Heart left ventricle (tissue), 16 donors: ENCODE measurements at regions of chr3 and their contacts with region 1.

Region 1: DNA sequence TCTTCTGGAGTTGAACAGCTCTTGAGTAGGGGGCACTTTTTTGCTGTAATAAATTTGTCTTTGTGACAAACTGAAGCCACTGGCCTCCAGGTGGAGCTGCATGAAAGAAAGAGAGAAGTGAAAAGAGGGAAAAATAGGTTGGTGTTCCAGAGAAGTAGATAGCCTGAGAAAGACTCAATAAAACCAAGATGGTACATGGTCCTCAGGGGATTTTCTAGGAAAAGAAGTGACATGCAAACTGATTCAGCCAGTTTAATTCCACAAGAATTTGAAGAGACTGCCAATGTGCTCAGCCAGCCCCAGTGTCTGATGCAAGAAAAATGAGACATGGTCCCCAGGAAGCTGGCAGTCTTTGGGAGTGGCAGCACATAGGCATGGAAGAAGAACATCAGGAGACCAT is 152.7 kb downstream of the CD47 start:
- DNase-seq: peak in 1 of 5 donors; percentile 26
- ATAC-seq: peak in 2 of 4 donors; percentile 36
- H3K4me3 ChIP-seq: no peak overlapping the region
- H3K27ac ChIP-seq: no peak overlapping the region
- H3K4me1 ChIP-seq: peaks cover 0 to 4% (median 0%) of the 10 kb centered on the region in 12 donors
- H3K27me3 ChIP-seq: no peaks in the 10 kb centered on the region
- CTCF ChIP-seq: peak; percentile 15 to 59 (median 47)
- POLR2A ChIP-seq: no peak

Region 2: DNA sequence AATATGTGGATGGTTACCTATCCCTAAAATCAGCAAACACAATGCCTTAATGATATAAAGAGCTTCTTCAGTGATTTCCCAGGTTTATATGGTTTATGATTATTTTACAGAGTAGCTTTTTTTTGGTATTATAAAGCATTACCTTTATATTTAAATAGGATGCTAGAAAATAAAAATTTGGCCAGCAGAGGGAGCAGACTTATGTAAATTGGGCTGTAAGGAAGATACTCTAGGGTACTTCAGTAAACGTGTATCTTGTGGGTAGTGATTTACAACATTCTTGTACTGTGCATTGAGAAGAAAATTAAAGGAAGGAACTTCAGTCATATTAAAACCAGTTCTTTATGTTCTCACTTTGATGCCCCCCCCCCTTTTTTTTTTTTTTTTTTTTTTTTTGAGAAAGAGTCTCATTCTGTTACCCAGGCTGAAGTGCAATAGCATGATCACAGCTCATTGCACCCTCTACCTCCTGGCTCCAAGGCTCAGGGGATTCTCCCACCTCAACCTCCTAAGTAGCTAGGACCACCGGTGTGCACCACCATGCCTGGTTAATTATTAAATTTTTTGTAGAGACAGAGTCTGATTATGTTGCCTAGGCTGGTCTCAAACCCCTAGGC is 247.5 kb before region 1 on chr3:
- intact Hi-C with region 1: no loop called
- DNase-seq: no peak
- ATAC-seq: peak in 2 of 4 donors; percentile 55 to 61
- H3K4me3 ChIP-seq: no peak overlapping the region
- H3K27ac ChIP-seq: no peak overlapping the region
- H3K4me1 ChIP-seq: peaks cover 0 to 8% (median 0%) of the 10 kb centered on the region in 12 donors
- H3K27me3 ChIP-seq: no peaks in the 10 kb centered on the region
- CTCF ChIP-seq: peak; percentile 31 to 66 (median 52)
- POLR2A ChIP-seq: no peak

Region 3: GRCh38 chr3:108022256-108023097 is 84.3 kb after region 1 on chr3:
- intact Hi-C with region 1: no loop called
- DNase-seq: no peak
- ATAC-seq: peak in 1 of 4 donors; percentile 41
- H3K4me3 ChIP-seq: no peak overlapping the region
- H3K27ac ChIP-seq: no peak overlapping the region
- H3K4me1 ChIP-seq: peaks cover 0 to 10% (median 0%) of the 10 kb centered on the region in 12 donors
- H3K27me3 ChIP-seq: no peaks in the 10 kb centered on the region
- CTCF ChIP-seq: no peak
- POLR2A ChIP-seq: no peak

Region 4: GRCh38 chr3:108090701-108091451 is 152.7 kb after region 1 on chr3 and contains the start of gene CD47:
- intact Hi-C with region 1: loop called in 2 of 10 experiments (anchors 5 kb)
- DNase-seq: peak; percentile 95 to 99 (median 96)
- ATAC-seq: peak; percentile 82 to 97 (median 94)
- H3K4me3 ChIP-seq: peak within 1 kb of the TSS; percentile 84 to 99 (median 92)
- H3K27ac ChIP-seq: peak within 1 kb of the TSS; percentile 25 to 97 (median 90)
- H3K4me1 ChIP-seq: peaks cover 0 to 41% (median 19%) of the 10 kb centered on the region in 12 donors
- H3K27me3 ChIP-seq: no peaks in the 10 kb centered on the region
- CTCF ChIP-seq: no peak
- POLR2A ChIP-seq: peak; percentile 19 to 89
- total RNA-seq, gene CD47: 34.4 to 80.6 (median 45.2) TPM

Region 5: GRCh38 chr3:108322352-108322751 is 384.2 kb after region 1 on chr3:
- intact Hi-C with region 1: loop called in 2 of 10 experiments (anchors 10 kb)
- DNase-seq: no peak
- ATAC-seq: no peak
- H3K4me3 ChIP-seq: no peak overlapping the region
- H3K27ac ChIP-seq: no peak overlapping the region
- H3K4me1 ChIP-seq: no peaks in the 10 kb centered on the region
- H3K27me3 ChIP-seq: no peaks in the 10 kb centered on the region
- CTCF ChIP-seq: peak in 4 of 12 donors; percentile 8 to 16 (median 14)
- POLR2A ChIP-seq: no peak

Region 6: GRCh38 chr3:108472001-108472591 is 534.0 kb after region 1 on chr3:
- intact Hi-C with region 1: loop called in 7 of 10 experiments (anchors 2 to 10 kb)
- DNase-seq: no peak
- ATAC-seq: peak in 2 of 4 donors; percentile 27 to 33
- H3K4me3 ChIP-seq: no peak overlapping the region
- H3K27ac ChIP-seq: no peak overlapping the region
- H3K4me1 ChIP-seq: peaks cover 0 to under 1% (median 0%) of the 10 kb centered on the region in 12 donors
- H3K27me3 ChIP-seq: no peaks in the 10 kb centered on the region
- CTCF ChIP-seq: no peak
- POLR2A ChIP-seq: no peak

Region 7: DNA sequence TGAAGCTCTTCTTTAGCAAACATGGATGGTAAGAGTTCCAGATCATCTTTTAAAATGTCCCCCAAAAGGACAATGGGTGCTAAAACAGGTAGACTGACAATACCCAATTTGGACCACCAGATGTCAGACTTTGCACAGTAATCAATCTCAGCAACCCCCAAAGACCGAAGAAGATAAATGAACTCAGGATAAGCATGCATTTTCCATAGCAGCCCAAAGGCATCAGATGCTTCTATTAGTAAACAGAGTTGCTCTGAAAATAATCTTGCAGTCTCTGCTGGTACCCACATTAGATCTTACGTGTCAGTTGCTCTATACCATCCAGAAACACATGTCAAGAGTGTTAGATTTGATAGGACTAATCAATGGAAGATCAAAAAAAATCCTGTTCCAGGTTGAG is 551.6 kb after region 1 on chr3:
- intact Hi-C with region 1: loop called in 2 of 10 experiments (anchors 10 kb)
- DNase-seq: no peak
- ATAC-seq: peak in 3 of 4 donors; percentile 47 to 64 (median 54)
- H3K4me3 ChIP-seq: no peak overlapping the region
- H3K27ac ChIP-seq: no peak overlapping the region
- H3K4me1 ChIP-seq: peaks cover 0 to 22% (median 5%) of the 10 kb centered on the region in 12 donors
- H3K27me3 ChIP-seq: no peaks in the 10 kb centered on the region
- CTCF ChIP-seq: peak; percentile 58 to 83 (median 76)
- POLR2A ChIP-seq: no peak